GM13977 (cell line): ENCODE measurements at regions of chr12 and their contacts with region 1.

Region 1: GRCh38 chr12:47021298-47021697 is 58.1 kb upstream of the PCED1B start:
- DNase-seq: peak; percentile 23
- CTCF ChIP-seq: peak; percentile 74

Region 2: DNA sequence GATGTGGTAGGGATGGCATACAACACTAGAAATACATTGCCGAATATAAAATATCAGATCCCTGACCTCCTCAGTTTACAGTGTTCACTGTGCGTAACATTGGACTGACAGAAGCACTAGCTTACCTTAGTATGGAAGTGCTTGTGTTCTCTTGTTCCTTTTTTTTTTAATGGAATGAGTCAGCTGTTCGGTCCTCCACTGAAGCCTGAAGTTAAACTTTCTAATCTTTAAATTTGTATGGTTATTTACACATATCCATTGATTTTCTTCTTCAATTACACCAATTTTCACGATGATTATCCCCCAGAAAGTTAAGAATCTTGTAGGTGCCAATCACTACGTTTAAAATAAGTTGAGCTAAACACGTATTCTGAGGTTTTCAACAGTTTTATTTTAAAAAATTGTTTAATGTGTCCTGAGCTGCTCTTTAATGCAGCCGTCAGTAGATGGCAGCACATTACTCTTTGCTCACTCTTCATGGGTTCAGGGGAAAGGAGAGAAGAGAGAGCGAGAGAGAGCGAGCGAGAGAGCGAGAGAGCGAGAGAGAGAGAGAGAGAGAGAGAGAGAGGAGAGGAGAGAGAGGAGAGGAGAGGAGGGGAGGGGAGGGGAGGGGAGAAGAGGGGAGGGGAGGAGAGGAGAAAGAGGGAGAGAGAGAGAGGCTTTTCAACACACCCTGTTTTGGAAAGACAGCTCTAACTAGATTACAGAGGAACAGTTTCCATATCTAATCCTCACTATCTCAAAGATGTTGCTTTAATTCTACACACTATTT is 896.3 kb before region 1 on chr12:
- in situ Hi-C with region 1: loop called (anchors 25 kb)
- DNase-seq: peak; percentile 53
- CTCF ChIP-seq: peak; percentile 80

Region 3: GRCh38 chr12:46516933-46517578 is 504.2 kb before region 1 on chr12:
- in situ Hi-C with region 1: no loop called
- DNase-seq: peak; percentile 61
- CTCF ChIP-seq: no peak

Region 4: GRCh38 chr12:46963977-46964971 is 57.0 kb before region 1 on chr12:
- in situ Hi-C with region 1: no loop called
- DNase-seq: no peak
- CTCF ChIP-seq: no peak